Colonic mucosa (tissue), 4 donors: ENCODE measurements at regions of chr2 and their contacts with region 1.

Region 1: DNA sequence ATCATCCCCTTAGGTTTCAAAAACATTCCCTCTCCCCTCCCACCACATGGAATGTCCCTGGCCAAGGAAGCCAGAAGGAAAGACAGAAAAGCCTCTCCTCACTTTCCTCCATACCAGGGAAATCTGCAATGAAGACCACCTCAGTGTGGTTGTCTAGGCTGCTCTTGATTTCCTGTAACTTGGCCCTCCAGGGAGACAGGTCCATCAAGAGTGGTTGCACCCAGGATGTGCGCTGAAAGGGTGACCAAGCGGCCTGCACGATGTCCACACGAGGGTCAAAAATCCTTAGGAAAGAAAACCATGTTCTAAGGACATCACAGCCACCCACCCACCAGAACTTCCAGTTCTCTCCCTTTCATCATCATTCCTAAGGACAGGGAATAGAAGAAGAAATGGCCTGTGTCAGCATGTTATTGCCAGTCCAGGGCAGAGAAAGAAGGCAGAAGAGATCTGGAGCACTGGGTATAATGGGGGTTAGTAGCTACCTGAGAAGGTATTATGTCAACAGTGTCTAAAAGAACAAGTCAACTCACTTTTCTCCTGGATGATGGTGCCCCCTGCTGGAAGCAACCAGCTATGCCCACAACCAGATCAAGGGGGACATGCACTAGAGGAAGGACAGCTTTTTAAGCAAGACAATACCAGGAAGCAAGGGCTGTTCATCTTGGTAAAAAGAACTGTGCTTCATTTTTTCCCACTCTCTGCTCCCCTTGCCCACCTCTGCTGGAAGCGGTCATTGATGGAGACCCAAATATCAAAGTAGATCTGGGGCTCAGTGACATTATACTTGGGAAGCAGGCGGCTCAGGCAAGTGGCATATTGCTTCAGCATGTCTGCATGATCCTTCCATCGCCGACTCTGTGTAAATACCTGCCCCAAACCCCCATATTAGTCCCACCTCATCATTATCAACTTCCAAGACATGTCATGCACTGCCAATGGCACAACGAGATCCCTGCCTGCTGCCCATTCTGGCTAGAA is 9.3 kb downstream of the GGCX start:
- DNase-seq: peak; percentile 92
- H3K4me3 ChIP-seq: no peak overlapping the region
- H3K27ac ChIP-seq: no peak overlapping the region
- H3K4me1 ChIP-seq: no peaks in the 10 kb centered on the region
- H3K27me3 ChIP-seq: no peaks in the 10 kb centered on the region
- CTCF ChIP-seq: peak; percentile 92

Region 2: DNA sequence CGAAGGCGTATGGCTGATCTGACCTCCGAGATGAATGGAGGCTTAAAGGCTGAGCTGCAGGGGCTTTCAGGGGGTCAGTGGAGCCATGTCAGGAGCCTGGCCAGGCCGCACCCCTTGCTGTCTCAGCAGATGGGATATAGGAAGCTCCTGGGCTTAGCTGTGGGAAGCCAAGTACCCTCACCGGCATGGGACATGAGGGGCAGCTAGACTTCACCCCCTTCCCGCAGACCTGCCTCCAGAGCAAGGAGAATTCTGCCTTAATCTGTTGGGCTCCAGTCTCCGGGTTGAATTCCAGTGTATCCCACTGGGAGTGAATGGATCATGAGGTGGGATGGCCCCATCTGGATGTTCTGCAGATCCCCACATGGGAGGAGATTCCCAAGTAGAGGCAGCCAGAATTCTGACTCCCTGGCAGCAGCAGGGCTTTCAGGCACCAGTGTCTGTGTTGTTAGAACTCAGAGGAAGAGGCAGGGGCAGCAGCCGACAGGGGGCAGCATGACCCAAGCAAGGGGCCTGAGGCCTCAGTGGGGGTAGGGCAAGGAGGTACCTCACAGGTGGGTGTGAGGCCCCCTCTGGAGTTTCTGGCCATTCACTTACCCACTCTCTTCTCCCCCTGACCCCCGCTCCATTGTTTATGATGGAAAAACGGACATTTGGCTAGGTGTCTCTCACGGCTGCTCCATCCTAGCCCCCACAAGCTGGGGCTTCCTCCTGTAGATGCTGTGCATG is 160.9 kb before region 1 on chr2:
- intact Hi-C with region 1: loop called (anchors 10 kb)
- DNase-seq: peak; percentile 79
- H3K4me3 ChIP-seq: no peak overlapping the region
- H3K27ac ChIP-seq: no peak overlapping the region
- H3K4me1 ChIP-seq: no peaks in the 10 kb centered on the region
- H3K27me3 ChIP-seq: no peaks in the 10 kb centered on the region
- CTCF ChIP-seq: peak; percentile 58

Region 3: DNA sequence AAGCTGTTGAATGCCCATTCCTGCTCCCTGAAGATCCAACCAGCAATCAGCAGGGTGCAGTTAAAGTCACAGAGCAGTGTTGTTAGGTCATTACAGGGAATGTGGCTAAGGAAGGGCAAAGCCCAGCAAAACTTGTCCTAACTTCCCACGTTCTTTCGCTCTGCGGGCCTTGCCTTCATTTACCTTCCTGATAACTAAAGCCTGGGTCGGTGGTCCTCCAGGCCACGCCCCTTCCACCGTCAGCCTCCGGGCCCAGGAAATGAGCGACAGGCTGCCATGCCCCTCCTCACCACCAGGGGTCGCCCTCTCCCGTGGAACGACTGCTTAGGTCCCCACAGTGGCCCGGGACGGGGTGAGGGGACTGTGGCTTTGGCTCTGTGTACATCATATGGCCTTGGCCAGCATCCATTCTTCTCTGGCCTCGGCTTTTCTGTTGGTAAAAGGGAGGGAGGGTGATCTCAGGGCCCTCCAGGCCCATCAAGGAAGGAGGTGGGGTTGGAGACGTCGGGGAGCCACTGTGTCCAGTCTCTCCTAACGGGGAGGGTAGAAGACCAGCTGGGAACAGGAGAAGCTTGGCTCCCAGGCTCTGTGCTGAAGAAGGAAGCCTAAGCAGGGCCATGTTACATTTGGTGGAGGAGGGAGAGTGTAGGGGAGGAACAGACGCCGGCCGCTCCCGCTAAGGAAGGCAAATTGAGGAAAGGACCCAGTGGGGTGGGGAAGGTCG is 131.3 kb before region 1 on chr2:
- intact Hi-C with region 1: loop called (anchors 2 kb)
- DNase-seq: peak; percentile 94
- H3K4me3 ChIP-seq: peak overlapping the region; percentile 10
- H3K27ac ChIP-seq: peak overlapping the region; percentile 82
- H3K4me1 ChIP-seq: peaks cover 22% of the 10 kb centered on the region
- H3K27me3 ChIP-seq: no peaks in the 10 kb centered on the region
- CTCF ChIP-seq: peak; percentile 100